Dendritic cell treated with granulocyte-macrophage colony-stimulating factor and Interleukin-4, amounts not matched to agents 40 ng/mL and 50 ng/mL, for 4 days (primary cell): ENCODE measurements at regions of chr5 and their contacts with region 1.

Region 1: GRCh38 chr5:96844476-96844990 is 31.8 kb upstream of the ERAP2 start:
- H3K4me3 Mint-ChIP-seq: no peak overlapping the region
- H3K27ac Mint-ChIP-seq: peak overlapping the region; percentile 71
- H3K4me1 Mint-ChIP-seq: peaks cover 50% of the 10 kb centered on the region
- H3K27me3 Mint-ChIP-seq: no peaks in the 10 kb centered on the region

Region 2: DNA sequence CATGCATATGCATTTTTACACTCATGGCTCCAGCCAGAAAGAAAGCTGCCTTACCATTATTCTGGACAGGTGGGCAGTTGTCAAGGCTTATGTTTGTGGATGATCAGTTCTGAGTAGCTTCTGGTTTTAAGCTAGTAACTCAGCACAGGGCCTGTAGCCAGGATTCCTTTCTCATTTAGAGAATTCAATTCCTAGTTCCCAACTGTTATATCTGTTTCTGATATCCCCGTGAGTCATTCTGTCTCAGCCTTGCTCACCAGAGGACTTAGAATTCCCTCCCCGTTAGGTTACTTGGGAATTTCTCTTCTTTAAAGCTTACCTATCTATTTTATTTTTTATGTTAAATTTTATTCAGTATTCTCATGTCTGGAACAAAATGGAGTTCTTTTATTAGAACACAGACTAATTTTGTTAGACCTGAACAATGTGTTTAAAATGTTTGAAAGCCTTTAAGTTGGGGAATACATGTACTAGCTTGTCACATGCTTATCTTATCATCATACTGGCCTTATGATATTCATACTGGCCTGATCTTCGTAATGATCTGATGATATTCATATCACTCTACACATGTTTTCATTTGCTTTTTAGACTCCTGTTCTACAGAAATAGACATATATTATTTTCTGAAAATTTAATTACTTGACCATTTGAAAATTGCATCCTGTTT is 135.2 kb before region 1 on chr5:
- intact Hi-C with region 1: no loop called
- H3K4me3 Mint-ChIP-seq: no peak overlapping the region
- H3K27ac Mint-ChIP-seq: no peak overlapping the region
- H3K4me1 Mint-ChIP-seq: peaks cover 31% of the 10 kb centered on the region
- H3K27me3 Mint-ChIP-seq: no peaks in the 10 kb centered on the region

Region 3: GRCh38 chr5:96857933-96858332 is 13.4 kb after region 1 on chr5:
- intact Hi-C with region 1: loop called (anchors 2 kb)
- H3K4me3 Mint-ChIP-seq: no peak overlapping the region
- H3K27ac Mint-ChIP-seq: peak overlapping the region; percentile 30
- H3K4me1 Mint-ChIP-seq: peaks cover 30% of the 10 kb centered on the region
- H3K27me3 Mint-ChIP-seq: no peaks in the 10 kb centered on the region